ENCODE measurements at regions of chr5 and their contacts with region 1.

Region 1: GRCh38 chr5:40437452-40437861 is 242.3 kb upstream of the PTGER4 start:
- DNase-seq: no peak
- ATAC-seq: peak; percentile 80
- H3K4me3 Mint-ChIP-seq: peak overlapping the region; percentile 56
- H3K27ac Mint-ChIP-seq: peak overlapping the region; percentile 54
- H3K4me1 Mint-ChIP-seq: peaks cover 45% of the 10 kb centered on the region
- H3K27me3 Mint-ChIP-seq: no peaks in the 10 kb centered on the region
- CTCF ChIP-seq: no peak

Region 2: GRCh38 chr5:39948867-39949468 is 488.5 kb before region 1 on chr5:
- CTCF ChIA-PET with region 1: no interaction called
- POLR2A ChIA-PET with region 1: no interaction called
- intact Hi-C with region 1: loop called (anchors 2 kb)
- DNase-seq: no peak
- ATAC-seq: peak; percentile 83
- H3K4me3 Mint-ChIP-seq: no peak overlapping the region
- H3K27ac Mint-ChIP-seq: no peak overlapping the region
- H3K4me1 Mint-ChIP-seq: peaks cover 3% of the 10 kb centered on the region
- H3K27me3 Mint-ChIP-seq: no peaks in the 10 kb centered on the region
- CTCF ChIP-seq: no peak

Region 3: GRCh38 chr5:40367255-40367654 is 70.2 kb before region 1 on chr5:
- CTCF ChIA-PET with region 1: no interaction called
- POLR2A ChIA-PET with region 1: no interaction called
- intact Hi-C with region 1: loop called (anchors 2 kb)
- DNase-seq: no peak
- ATAC-seq: peak; percentile 45
- H3K4me3 Mint-ChIP-seq: no peak overlapping the region
- H3K27ac Mint-ChIP-seq: no peak overlapping the region
- H3K4me1 Mint-ChIP-seq: peaks cover 13% of the 10 kb centered on the region
- H3K27me3 Mint-ChIP-seq: no peaks in the 10 kb centered on the region
- CTCF ChIP-seq: no peak

Region 4: DNA sequence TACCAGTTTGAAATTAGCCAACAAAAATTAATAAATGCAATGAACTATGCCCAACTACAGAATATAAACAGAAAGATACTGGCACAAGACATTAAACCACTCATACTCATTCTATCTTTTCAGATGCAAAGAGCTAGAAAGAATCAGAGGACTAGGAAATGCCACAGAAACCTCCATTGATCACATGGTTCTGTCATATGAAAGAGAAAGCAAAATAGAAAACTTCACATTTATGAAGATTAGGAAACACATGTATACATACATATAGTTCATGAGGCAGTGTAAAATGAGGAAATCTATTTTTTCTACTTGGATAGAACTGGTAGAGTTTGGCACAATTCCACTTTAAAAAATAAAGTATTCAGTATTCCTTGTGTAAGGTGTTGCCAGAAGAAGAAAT is 32.8 kb before region 1 on chr5:
- CTCF ChIA-PET with region 1: no interaction called
- POLR2A ChIA-PET with region 1: interaction called, 7 read pairs
- intact Hi-C with region 1: loop called (anchors 5 kb)
- DNase-seq: no peak
- ATAC-seq: peak; percentile 32
- H3K4me3 Mint-ChIP-seq: peak overlapping the region; percentile 21
- H3K27ac Mint-ChIP-seq: peak overlapping the region; percentile 38
- H3K4me1 Mint-ChIP-seq: peaks cover 56% of the 10 kb centered on the region
- H3K27me3 Mint-ChIP-seq: no peaks in the 10 kb centered on the region
- CTCF ChIP-seq: no peak

Region 5: DNA sequence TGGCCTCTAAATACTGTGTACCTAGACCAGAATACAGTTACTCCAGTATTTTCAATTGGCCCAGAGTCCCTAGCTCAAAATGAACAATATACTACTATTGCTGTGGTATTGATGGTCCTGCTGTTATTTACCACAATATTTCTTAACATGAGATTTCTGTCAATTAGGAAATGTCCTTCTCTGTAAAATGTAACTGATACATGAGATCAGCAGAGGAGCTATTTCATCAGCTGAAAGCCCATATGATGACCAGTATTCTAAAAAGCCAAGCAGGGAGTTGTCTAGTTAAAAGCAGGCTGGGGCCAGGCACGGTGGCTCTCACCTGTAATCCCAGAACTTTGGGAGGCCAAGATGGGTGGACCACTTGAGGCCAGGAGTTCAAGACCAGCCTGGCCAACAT is 54.6 kb after region 1 on chr5:
- CTCF ChIA-PET with region 1: interaction called, 4 read pairs
- POLR2A ChIA-PET with region 1: interaction called, 13 read pairs
- intact Hi-C with region 1: no loop called
- DNase-seq: no peak
- ATAC-seq: no peak
- H3K4me3 Mint-ChIP-seq: peak overlapping the region; percentile 21
- H3K27ac Mint-ChIP-seq: peak overlapping the region; percentile 74
- H3K4me1 Mint-ChIP-seq: peaks cover 60% of the 10 kb centered on the region
- H3K27me3 Mint-ChIP-seq: no peaks in the 10 kb centered on the region
- CTCF ChIP-seq: no peak

Region 6: DNA sequence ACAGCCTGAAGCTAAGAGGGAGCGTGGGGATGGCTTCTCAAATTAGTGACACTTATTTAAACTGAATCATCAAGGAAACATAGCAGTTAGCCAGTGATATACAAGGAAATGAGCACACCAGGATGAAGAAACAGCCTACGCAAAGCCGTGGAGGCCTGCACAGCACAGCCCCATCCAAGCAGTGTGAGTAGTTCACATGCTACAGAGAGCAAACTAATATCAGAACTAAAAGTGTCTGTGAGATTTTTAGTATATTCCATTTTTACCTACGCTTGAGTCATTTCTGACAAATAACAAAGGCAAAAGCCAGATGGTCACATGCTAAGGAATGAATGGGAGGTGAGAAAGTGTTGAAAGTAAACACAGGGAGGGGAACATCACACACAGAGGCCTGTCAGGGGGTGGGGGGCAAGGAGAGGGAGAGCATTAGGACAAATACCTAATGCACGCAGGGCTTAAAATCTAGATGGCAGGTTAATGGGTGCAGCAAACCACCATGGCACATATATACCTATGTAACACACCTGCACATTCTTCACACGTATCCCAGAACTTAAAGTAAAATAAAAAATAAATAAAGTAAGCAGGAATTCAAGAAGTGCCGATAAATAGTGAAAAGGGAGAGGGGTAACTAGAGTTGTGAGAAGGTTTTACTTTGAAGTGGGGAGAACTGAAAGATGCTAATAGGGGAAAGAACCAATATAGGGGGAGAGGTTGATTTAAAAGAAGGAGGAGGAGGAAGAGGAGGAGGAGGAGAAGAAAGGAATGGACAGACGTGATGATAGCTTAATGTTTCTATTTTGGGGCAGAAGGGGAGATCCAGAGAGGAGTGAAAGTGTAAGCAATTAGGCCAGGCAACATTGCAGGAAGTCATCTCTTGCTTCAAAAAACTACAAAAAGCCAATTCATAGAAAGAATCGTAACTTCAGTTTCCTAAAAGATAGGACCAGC is 141.3 kb after region 1 on chr5:
- CTCF ChIA-PET with region 1: no interaction called
- POLR2A ChIA-PET with region 1: no interaction called
- intact Hi-C with region 1: loop called (anchors 5 kb)
- DNase-seq: no peak
- ATAC-seq: peak; percentile 89
- H3K4me3 Mint-ChIP-seq: peak overlapping the region; percentile 63
- H3K27ac Mint-ChIP-seq: peak overlapping the region; percentile 73
- H3K4me1 Mint-ChIP-seq: peaks cover 19% of the 10 kb centered on the region
- H3K27me3 Mint-ChIP-seq: no peaks in the 10 kb centered on the region
- CTCF ChIP-seq: no peak

Region 7: DNA sequence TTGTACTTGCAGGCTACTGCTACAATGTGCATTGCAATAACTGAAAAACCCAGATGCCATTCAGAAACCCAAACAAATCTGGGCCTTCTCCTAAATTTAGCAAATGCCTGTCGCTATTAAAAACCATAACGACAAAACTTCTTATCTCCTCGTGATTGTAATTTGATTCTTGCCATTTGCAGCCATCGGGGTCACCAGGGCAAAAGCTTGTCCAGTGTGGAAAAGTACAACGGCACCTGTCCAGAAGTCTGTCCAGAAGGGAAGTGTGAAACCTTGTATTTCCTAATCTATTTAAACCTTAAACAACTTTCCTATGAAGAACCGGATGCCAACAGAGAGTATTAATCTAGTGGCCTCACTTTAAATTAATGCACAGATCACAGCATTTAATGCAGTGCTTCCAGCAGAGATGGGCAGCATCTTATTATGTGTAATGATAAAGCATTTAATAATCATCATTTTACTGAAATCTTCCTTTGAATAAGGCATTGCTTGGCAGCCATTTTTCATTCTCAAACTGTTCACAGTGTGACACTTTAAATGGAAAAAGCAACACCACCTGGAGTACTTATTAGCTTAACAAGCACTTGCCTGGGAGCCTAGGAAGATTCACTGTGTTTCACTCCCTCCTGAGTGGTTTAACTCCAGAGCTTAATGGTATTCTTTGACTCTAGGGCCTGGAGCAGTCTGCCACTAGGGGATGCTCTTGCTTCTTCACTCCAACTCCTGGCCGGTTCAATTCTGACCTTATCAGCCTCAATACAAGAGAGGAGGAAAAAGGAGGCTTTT is 466.9 kb after region 1 on chr5:
- CTCF ChIA-PET with region 1: no interaction called
- POLR2A ChIA-PET with region 1: no interaction called
- intact Hi-C with region 1: no loop called
- DNase-seq: no peak
- ATAC-seq: no peak
- H3K4me3 Mint-ChIP-seq: no peak overlapping the region
- H3K27ac Mint-ChIP-seq: no peak overlapping the region
- H3K4me1 Mint-ChIP-seq: no peaks in the 10 kb centered on the region
- H3K27me3 Mint-ChIP-seq: peaks cover 5% of the 10 kb centered on the region
- CTCF ChIP-seq: no peak

Region 8: DNA sequence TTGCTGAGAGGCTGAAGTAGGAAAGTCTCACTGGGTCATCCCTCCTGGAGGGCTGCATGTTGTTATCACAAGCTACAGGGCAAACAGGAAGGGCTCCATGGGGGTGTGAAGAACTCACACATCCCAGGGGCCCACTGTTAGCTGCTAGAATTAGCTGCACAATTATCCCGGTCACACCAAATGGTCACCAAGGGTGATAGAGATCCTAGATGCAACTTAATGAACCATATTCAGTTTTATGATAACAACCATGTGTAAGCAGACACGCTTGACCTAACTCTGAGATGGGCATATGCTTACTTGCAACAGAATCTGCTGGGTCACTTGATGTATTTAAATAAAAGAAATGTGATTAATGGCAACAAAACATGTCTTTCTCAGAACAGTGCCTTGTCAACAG is 919.3 kb after region 1 on chr5:
- CTCF ChIA-PET with region 1: no interaction called
- POLR2A ChIA-PET with region 1: no interaction called
- intact Hi-C with region 1: no loop called
- DNase-seq: no peak
- ATAC-seq: no peak
- H3K4me3 Mint-ChIP-seq: no peak overlapping the region
- H3K27ac Mint-ChIP-seq: no peak overlapping the region
- H3K4me1 Mint-ChIP-seq: no peaks in the 10 kb centered on the region
- H3K27me3 Mint-ChIP-seq: no peaks in the 10 kb centered on the region
- CTCF ChIP-seq: no peak

Measured in activated B cell treated with CpG ODN at 0.5 μM for 24 hours (primary cell).